ENCODE measurements at regions of chr6 and their contacts with region 1.

Region 1: DNA sequence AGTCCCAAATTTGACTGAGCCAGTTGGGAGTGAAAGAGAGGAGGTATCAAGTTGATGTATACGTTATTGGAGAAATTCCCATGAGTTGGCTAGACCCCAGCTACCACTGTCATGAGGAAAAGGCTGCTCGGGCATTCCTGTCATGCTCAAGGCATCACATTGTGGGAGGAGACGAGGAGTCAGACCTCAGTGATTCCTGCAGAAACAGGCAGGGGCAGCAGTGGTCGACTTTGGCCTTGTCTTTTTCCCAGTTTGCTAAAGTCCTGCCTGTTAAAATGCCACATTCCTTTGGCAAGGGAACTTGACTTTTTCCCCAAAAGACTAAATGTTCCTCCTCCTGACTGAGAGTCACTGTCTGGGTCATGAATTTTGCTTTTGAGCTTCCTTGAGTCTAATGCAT is 295.5 kb upstream of the HS3ST5 start:
- DNase-seq: no peak
- H3K4me3 ChIP-seq: no peak overlapping the region
- CTCF ChIP-seq: no peak

Region 2: GRCh38 chr6:114714836-114715507 is 76.6 kb after region 1 on chr6:
- in situ Hi-C with region 1: loop called (anchors 10 kb)
- DNase-seq: no peak
- H3K4me3 ChIP-seq: no peak overlapping the region
- CTCF ChIP-seq: no peak

Measured in astrocyte of the cerebellum (primary cell).